ENCODE measurements at regions of chr2 and their contacts with region 1.

Region 1: DNA sequence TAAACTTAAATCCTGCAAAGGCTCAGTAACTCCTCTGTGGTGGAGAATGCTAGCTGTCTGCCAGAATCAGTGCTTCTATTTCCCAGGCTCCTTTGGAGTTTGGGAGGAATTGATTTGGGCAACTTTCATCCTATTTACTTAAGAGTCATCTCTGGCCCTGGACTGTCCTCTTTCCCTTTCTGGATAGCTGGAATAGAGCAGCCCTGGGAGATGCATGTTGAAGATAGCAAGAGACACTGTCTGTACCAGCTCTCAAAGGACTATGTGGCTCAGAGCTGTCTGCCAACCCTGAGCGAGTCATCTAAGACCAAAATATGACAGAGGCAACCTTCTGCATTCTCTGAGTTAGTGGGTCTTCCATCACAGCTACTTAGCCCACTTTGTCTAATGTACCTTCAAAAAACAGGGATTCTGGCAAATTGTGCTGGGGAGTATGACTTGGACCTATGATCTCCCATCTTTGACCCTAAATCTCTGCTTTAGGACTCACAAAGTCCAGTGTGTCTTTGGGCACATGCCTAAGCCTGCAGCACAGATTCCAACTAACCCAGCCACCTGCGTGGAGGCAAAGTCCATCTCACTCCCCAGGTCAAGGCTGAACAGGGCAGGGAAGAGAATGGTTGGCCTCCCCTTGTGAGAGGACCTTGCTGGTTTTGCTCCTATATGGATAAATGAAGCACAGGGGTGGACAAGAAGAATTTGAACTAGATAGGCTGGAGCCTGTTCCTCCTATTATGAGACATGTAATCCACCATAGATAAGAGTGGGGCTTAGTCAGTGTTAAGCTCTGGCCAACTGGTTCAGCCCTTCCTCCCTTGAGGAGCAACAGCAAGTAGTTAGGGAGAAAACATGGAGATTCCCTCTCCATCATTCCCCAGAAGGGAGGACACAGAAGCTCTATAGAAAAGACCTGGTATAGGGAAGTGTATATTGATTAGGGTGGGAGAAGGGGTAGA is 99.1 kb upstream of the PELI1 start:
- DNase-seq: no peak

Region 2: DNA sequence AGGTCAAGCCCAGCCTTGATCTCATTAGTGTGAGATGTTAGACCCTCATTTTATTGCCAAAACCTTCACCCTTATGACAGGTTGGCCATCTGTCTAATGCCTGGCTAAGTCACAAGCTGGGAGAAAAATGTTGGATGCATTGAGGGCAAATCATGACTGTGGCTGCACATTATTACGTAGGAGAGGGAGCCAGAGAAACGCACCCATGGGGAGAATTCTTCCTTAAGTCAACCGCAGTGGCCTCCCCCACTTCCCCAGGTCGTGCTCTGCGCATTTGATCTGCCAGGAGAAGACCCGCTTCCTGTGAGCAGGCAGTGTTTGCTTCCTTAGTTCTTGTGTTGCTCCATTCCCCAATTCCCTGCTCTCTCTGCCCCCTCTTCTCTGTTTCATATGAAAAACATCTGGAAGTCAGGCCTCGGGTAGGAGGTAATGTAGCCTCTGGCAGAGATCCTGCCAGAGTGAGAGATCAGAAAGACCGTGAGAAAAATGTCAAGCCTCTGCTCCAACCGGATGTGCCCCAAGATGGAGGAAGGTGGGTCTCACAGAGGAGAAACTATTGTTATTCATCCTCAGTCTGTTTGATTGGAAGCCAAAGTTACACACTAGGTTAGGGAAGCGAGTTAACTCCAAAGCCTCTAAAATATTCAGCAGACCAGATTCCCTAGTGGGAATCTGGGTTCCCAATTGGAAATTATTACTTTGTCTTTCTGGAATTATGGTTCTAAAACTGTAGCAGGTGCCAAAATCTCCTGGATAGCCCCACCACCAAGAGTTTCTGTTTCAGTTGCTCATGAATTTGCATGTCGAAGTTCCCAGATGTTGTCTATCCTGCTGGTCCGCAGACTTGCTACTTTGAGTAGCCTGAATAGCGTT is 45.2 kb after region 1 on chr2:
- intact Hi-C with region 1: loop called (anchors 5 kb)
- DNase-seq: no peak

Measured in cardiac septum (tissue), 1 donor.